GM10248 (cell line): ENCODE measurements at regions of chr12 and their contacts with region 1.

Region 1: DNA sequence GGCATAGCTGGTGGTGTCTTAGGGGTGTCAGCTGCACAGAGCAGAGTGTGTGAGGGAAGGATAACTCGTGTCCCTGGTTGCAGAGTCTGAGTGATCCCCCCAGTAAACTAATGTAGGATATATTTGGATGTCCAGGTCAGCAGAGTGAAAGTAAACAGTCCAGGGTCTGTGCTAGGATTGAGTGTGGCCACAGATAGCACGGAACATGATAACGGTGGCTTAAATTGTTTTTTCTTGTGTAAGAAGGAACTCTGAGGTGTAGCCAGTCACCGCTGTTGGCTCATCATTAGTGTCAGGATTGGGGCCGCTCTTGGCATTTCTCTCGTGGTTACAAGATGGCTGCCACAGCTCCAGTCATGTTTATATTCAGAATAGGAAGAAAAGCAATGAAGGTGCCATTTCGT is 97.3 kb downstream of the DERA start:
- DNase-seq: no peak
- CTCF ChIP-seq: no peak

Region 2: GRCh38 chr12:16020031-16020430 is 11.6 kb after region 1 on chr12:
- CTCF ChIA-PET with region 1: interaction called, 10 read pairs
- POLR2A ChIA-PET with region 1: no interaction called
- DNase-seq: no peak
- CTCF ChIP-seq: no peak